GM18951 (cell line): ENCODE measurements at regions of chr9 and their contacts with region 1.

Region 1: DNA sequence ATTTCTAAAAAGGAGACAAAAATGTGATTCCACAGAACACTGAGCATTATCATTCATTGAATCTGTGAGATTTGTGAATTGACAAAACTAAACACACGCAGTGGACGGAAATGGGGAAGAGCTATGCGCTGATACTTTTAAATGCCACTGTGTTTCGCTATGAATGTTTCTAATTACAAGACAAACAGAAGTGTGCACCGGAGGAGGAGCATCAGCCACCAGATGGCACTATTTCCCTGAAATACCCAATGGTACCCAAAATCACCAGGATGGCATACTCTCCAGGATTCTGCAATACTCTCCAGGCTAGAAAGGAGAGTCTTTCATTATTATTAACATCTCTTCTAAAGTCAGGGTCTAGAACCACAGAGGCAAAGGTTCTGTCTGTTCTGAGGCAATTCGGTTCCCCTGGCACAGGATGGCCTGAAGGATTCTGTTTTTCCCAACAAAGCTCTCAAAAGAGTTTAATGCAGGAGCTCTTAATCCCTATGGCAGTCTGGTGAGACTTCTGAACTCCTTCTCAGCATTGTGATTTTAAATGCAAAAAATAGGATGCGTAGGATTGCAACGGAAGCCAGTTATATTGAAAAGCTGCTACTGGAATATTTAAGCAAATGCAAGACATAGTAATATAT is 13.8 kb upstream of the PUM3 start:
- POLR2A ChIP-seq: no peak

Region 2: DNA sequence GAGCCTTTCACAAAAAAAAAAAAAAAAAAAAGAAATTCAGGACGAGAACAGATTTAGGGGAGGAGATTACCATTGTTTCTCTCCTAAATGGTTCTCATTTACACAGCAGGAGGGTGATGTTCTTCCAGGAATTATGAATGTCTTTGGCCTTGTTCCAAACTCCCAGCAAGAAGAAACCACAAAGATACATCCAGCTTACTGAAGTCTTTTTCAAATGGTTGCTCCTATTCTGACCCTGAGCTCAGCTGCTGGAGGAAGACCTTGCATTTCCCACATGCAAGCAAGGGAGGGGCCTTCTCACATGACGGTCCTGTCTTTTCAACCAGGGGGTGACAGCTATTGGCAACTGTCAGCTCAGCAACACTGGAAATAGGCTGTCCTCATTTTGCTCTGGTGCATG is 439.1 kb before region 1 on chr9:
- in situ Hi-C with region 1: no loop called
- POLR2A ChIP-seq: no peak

Region 3: GRCh38 chr9:2531481-2531880 is 326.2 kb before region 1 on chr9:
- in situ Hi-C with region 1: no loop called
- POLR2A ChIP-seq: no peak

Region 4: GRCh38 chr9:3181049-3181953 is 323.6 kb after region 1 on chr9:
- in situ Hi-C with region 1: loop called (anchors 25 kb)
- POLR2A ChIP-seq: no peak

Region 5: DNA sequence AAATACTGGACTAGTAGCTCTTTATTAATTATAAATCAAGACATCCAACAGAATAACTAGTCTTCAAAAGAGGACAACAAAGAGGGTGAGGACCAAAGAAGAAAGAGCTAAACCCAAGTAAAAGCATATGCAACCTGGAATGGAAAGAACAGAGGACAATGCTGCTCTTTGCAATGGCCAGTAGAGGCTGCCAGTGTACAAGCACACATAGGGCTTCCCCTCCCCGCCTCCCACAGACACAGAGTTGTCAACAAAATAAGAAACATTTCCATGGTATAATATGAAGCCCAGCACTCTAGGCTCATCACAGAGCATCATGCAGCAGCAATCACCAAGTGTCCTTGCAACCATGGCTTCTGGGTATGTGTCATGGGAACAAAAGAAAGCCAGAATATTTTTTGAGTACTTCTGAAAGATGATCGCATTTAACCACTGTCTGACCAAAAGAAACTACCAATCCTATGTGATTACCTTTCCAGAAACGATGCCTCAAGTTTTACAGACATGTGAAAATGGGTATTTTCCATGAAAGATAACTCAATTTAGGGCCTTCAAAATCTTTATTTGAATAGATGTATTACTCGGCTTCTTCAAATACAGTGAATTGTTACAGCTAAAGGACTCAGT is 610.0 kb after region 1 on chr9:
- in situ Hi-C with region 1: loop called (anchors 25 kb)
- POLR2A ChIP-seq: no peak

Region 6: GRCh38 chr9:4366591-4367330 is 1509.1 kb after region 1 on chr9:
- in situ Hi-C with region 1: loop called (anchors 25 kb)
- POLR2A ChIP-seq: no peak